GM12878 (cell line): ENCODE measurements at regions of chr19 and their contacts with region 1.

Region 1: GRCh38 chr19:10936661-10937084 is 8.1 kb downstream of the TIMM29 start:
- DNase-seq: peak; percentile 35
- ATAC-seq: peak; percentile 90
- H3K4me3 ChIP-seq: no peak overlapping the region
- H3K27ac ChIP-seq: no peak overlapping the region
- H3K4me1 ChIP-seq: no peaks in the 10 kb centered on the region; the same call in 1 of the 2 replicates
- H3K27me3 ChIP-seq: no peaks in the 10 kb centered on the region
- CTCF ChIP-seq: peak; percentile 64 to 70 (median 65)
- EP300 ChIP-seq: no peak
- POLR2A ChIP-seq: no peak
- RAD21 ChIP-seq: peak; percentile 82

Region 2: GRCh38 chr19:10612491-10613119 is 324.1 kb before region 1 on chr19:
- CTCF ChIA-PET with region 1: no interaction called
- POLR2A ChIA-PET with region 1: no interaction called
- RAD21 ChIA-PET with region 1: no interaction called
- SMC1A ChIA-PET with region 1: no interaction called
- in situ Hi-C with region 1: no loop called
- intact Hi-C with region 1: no loop called
- DNase-seq: no peak
- ATAC-seq: no peak
- H3K4me3 ChIP-seq: no peak overlapping the region
- H3K27ac ChIP-seq: no peak overlapping the region
- H3K4me1 ChIP-seq: no peaks in the 10 kb centered on the region
- H3K27me3 ChIP-seq: no peaks in the 10 kb centered on the region
- CTCF ChIP-seq: no peak
- EP300 ChIP-seq: no peak
- POLR2A ChIP-seq: no peak
- RAD21 ChIP-seq: no peak

Region 3: GRCh38 chr19:10812902-10813404 is 123.7 kb before region 1 on chr19:
- CTCF ChIA-PET with region 1: no interaction called
- POLR2A ChIA-PET with region 1: no interaction called
- RAD21 ChIA-PET with region 1: no interaction called
- SMC1A ChIA-PET with region 1: no interaction called
- in situ Hi-C with region 1: no loop called
- intact Hi-C with region 1: no loop called
- DNase-seq: no peak
- ATAC-seq: no peak
- H3K4me3 ChIP-seq: no peak overlapping the region
- H3K27ac ChIP-seq: no peak overlapping the region
- H3K4me1 ChIP-seq: no peaks in the 10 kb centered on the region; the same call in 1 of the 2 replicates
- H3K27me3 ChIP-seq: no peaks in the 10 kb centered on the region
- CTCF ChIP-seq: no peak
- EP300 ChIP-seq: no peak
- POLR2A ChIP-seq: 0 out of 2 replicates have a peak, but pooled peaks have one; percentile 28
- RAD21 ChIP-seq: no peak

Region 4: GRCh38 chr19:10870955-10871603 is 65.6 kb before region 1 on chr19 and contains the start of gene CARM1:
- CTCF ChIA-PET with region 1: interaction called, 16 read pairs
- POLR2A ChIA-PET with region 1: interaction called, 6 read pairs
- RAD21 ChIA-PET with region 1: interaction called, 7 read pairs
- SMC1A ChIA-PET with region 1: interaction called, 9 read pairs
- in situ Hi-C with region 1: no loop called
- intact Hi-C with region 1: no loop called
- DNase-seq: peak; percentile 79
- ATAC-seq: peak; percentile 84
- H3K4me3 ChIP-seq: peak within 1 kb of the TSS; percentile 68
- H3K27ac ChIP-seq: peak within 1 kb of the TSS; percentile 90
- H3K4me1 ChIP-seq: peaks cover 33% of the 10 kb centered on the region
- H3K27me3 ChIP-seq: no peaks in the 10 kb centered on the region
- CTCF ChIP-seq: peak; percentile 55 to 90 (median 66)
- EP300 ChIP-seq: no peak
- POLR2A ChIP-seq: no peak
- RAD21 ChIP-seq: peak; percentile 72
- polyA plus RNA-seq, gene CARM1: 0.45 to 0.49 TPM

Region 5: GRCh38 chr19:10952809-10953208 is 16.1 kb after region 1 on chr19:
- CTCF ChIA-PET with region 1: interaction called, 31 read pairs
- POLR2A ChIA-PET with region 1: interaction called, 11 read pairs
- RAD21 ChIA-PET with region 1: interaction called, 10 read pairs
- SMC1A ChIA-PET with region 1: interaction called, 16 read pairs
- in situ Hi-C with region 1: no loop called
- intact Hi-C with region 1: no loop called
- DNase-seq: no peak
- ATAC-seq: no peak
- H3K4me3 ChIP-seq: no peak overlapping the region
- H3K27ac ChIP-seq: no peak overlapping the region
- H3K4me1 ChIP-seq: peaks cover 10% of the 10 kb centered on the region
- H3K27me3 ChIP-seq: no peaks in the 10 kb centered on the region
- CTCF ChIP-seq: no peak
- EP300 ChIP-seq: no peak
- POLR2A ChIP-seq: no peak
- RAD21 ChIP-seq: no peak

Region 6: DNA sequence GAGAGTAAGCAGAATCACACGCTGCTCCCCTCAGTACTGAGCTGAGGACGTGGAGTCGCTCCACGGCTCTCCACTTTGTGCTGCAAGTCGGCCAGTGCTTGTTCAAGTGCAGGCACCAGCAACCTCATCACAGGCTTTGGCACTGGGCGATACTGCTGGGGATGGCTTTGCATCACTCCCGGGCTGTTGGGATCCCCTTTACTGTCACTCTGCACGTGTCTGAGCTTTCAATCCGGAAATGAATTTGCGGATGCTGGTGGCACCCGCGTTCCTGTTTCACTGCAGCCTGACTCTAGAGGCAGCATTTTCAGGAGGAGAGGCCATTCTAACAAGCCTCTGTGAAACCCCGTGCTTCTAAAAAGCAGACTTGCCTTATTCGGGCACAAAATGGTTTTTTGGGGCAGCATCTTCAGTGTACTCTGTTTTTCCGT is 43.3 kb after region 1 on chr19:
- CTCF ChIA-PET with region 1: interaction called, 11 read pairs
- POLR2A ChIA-PET with region 1: interaction called, 7 read pairs
- RAD21 ChIA-PET with region 1: interaction called, 12 read pairs
- SMC1A ChIA-PET with region 1: interaction called, 17 read pairs
- in situ Hi-C with region 1: no loop called
- intact Hi-C with region 1: no loop called
- DNase-seq: peak; percentile 33
- ATAC-seq: peak; percentile 95
- H3K4me3 ChIP-seq: 0 out of 2 replicates have a peak overlapping the region, but pooled peaks have one; percentile 15
- H3K27ac ChIP-seq: 0 out of 2 replicates have a peak overlapping the region, but pooled peaks have one; percentile 20
- H3K4me1 ChIP-seq: peaks cover 26% of the 10 kb centered on the region
- H3K27me3 ChIP-seq: no peaks in the 10 kb centered on the region
- CTCF ChIP-seq: peak; percentile 24 to 32 (median 31); a peak in 2 of 6 replicates
- EP300 ChIP-seq: no peak
- POLR2A ChIP-seq: no peak
- RAD21 ChIP-seq: peak; percentile 32; the same call in 1 of the 2 replicates

Region 7: DNA sequence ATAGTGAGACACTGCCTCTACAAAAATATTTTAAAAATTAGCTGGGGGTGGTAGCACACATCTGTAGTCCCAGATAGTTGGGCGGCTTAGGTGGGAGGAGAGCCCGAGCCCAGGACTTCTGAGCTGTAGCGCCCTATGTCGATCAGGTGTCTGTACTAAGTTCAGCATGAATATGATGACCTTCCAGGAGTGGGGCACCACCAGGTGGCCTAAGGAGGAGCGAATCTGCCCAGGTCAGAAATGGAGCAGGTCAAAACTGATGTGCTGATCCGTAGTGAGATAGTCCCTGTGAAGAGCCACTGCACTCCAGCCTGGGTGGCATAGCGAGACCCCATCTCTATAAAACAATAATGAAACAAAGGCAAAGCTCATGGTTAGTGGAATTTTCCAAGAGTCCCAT is 75.0 kb after region 1 on chr19:
- CTCF ChIA-PET with region 1: interaction called, 20 read pairs
- POLR2A ChIA-PET with region 1: no interaction called
- RAD21 ChIA-PET with region 1: interaction called, 14 read pairs
- SMC1A ChIA-PET with region 1: interaction called, 14 read pairs
- in situ Hi-C with region 1: no loop called
- intact Hi-C with region 1: loop called (anchors 10 kb)
- DNase-seq: no peak
- ATAC-seq: no peak
- H3K4me3 ChIP-seq: no peak overlapping the region
- H3K27ac ChIP-seq: no peak overlapping the region
- H3K4me1 ChIP-seq: no peaks in the 10 kb centered on the region
- H3K27me3 ChIP-seq: no peaks in the 10 kb centered on the region
- CTCF ChIP-seq: peak in 2 of 3 experiments; percentile 18 to 22; a peak in 2 of 6 replicates
- EP300 ChIP-seq: no peak
- POLR2A ChIP-seq: no peak
- RAD21 ChIP-seq: no peak

Region 8: DNA sequence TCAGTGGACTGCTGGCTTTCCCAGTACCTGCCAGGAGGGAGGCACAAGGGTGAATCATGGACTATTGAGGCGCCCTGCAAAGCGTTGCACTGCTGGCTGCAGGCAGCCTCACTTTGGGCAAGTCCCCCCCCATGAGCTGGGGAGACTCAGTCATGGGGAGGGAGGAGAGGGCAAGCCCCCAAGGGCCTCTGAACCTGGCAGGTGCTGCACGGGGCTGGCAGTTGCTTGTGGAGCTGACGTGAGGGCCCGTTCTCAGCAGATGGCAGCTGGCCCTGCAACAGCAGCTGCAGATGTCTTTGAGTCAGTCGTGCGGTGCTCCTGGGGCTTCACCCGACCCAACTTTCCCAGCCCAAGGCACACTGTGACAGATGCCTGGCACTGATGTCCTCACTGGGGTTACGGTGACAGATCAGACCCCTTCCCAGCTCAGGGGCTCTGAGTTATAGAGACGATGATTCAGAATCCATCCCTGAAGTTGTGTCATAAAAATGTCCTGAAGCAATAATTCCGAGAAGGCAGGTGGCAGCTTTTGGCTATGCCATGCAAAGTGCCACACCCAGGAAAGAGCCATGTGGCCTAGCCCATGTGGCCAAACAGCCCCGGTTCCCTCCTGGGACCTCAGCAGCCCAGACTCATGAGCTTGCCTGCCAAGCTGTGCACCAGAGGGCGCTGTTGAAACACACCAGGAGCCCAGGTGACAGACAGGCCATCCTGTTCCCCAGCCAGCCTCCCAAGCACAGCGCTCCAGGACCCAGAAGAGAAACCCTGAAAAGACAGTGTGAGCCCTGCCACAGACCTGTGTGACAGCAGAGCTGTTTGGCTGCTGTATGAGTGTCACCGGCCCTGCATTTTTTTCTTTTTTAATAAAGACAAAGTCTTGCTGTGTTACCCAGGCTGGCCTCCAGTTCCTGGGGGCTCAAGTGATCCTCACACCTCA is 99.0 kb after region 1 on chr19:
- CTCF ChIA-PET with region 1: interaction called, 37 read pairs
- POLR2A ChIA-PET with region 1: interaction called, 10 read pairs
- RAD21 ChIA-PET with region 1: interaction called, 33 read pairs
- SMC1A ChIA-PET with region 1: interaction called, 18 read pairs
- in situ Hi-C with region 1: no loop called
- intact Hi-C with region 1: no loop called
- DNase-seq: peak; percentile 71
- ATAC-seq: peak; percentile 99
- H3K4me3 ChIP-seq: no peak overlapping the region
- H3K27ac ChIP-seq: no peak overlapping the region; the same call in 1 of the 2 replicates
- H3K4me1 ChIP-seq: peaks cover 4% of the 10 kb centered on the region; the same call in 1 of the 2 replicates
- H3K27me3 ChIP-seq: no peaks in the 10 kb centered on the region
- CTCF ChIP-seq: peak; percentile 93 to 99 (median 97); a peak in 5 of 6 replicates
- EP300 ChIP-seq: no peak
- POLR2A ChIP-seq: peak; percentile 44; the same call in 1 of the 2 replicates
- RAD21 ChIP-seq: peak; percentile 92

Region 9: GRCh38 chr19:11203194-11204075 is 266.8 kb after region 1 on chr19:
- CTCF ChIA-PET with region 1: interaction called, 9 read pairs
- POLR2A ChIA-PET with region 1: no interaction called
- RAD21 ChIA-PET with region 1: interaction called, 3 read pairs
- SMC1A ChIA-PET with region 1: no interaction called
- in situ Hi-C with region 1: no loop called
- intact Hi-C with region 1: loop called (anchors 5 kb)
- DNase-seq: no peak
- ATAC-seq: peak; percentile 71
- H3K4me3 ChIP-seq: no peak overlapping the region
- H3K27ac ChIP-seq: no peak overlapping the region
- H3K4me1 ChIP-seq: peaks cover 11% of the 10 kb centered on the region
- H3K27me3 ChIP-seq: no peaks in the 10 kb centered on the region
- CTCF ChIP-seq: peak; percentile 60 to 93 (median 81)
- EP300 ChIP-seq: no peak
- POLR2A ChIP-seq: no peak
- RAD21 ChIP-seq: peak; percentile 78